Psoas muscle (tissue), 8 donors: ENCODE measurements at regions of chr2 and their contacts with region 1.

Region 1: GRCh38 chr2:43343573-43344304 is 117.3 kb upstream of the ZFP36L2 start:
- DNase-seq: peak; percentile 66 to 71
- ATAC-seq: peak in 3 of 4 donors; percentile 49 to 74 (median 61)
- H3K4me3 ChIP-seq: no peak overlapping the region
- H3K27ac ChIP-seq: peak overlapping the region; percentile 88
- H3K4me1 ChIP-seq: peaks cover 93% of the 10 kb centered on the region
- H3K27me3 ChIP-seq: no peaks in the 10 kb centered on the region
- CTCF ChIP-seq: no peak

Region 2: GRCh38 chr2:43387092-43388062 is 43.6 kb after region 1 on chr2:
- intact Hi-C with region 1: loop called in 1 of 2 experiments (anchors 5 kb)
- DNase-seq: no peak
- ATAC-seq: peak in 2 of 4 donors; percentile 50 to 60
- H3K4me3 ChIP-seq: no peak overlapping the region
- H3K27ac ChIP-seq: peak overlapping the region; percentile 57
- H3K4me1 ChIP-seq: peaks cover 34% of the 10 kb centered on the region
- H3K27me3 ChIP-seq: no peaks in the 10 kb centered on the region
- CTCF ChIP-seq: no peak

Region 3: DNA sequence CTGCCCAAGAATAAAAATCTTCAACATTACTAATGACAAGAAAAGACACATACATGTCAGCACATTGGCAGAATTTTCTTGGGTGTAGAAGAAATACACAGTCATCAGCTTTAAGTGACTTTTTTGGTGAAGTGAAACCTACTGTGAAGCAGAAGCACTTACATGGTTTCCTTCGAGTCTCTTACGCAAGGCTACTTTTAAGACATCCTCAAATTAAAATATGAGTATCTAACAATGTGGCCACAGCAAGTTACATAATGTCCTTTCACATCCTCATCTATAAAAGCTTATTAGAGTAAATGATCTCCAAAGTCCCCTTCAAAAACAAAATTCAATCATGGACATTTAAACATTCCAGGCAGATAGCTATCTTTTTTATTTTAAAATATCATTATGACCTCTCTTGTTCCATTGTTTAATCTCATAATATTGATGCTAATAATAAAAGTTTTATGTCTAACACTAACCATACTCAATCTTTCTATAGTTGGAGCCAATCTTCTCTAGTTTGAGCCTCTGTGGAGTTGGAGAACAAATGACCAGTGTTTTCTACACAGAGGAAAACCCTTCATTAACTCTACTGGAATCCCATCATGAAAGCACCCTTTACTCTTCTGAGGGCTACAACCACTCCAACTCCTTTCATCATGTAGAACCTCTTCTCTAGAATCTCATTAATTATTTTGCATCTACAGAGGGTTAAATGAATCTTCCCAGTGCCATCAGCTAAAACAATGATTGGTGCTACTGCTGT is 64.8 kb after region 1 on chr2:
- intact Hi-C with region 1: no loop called
- DNase-seq: no peak
- ATAC-seq: no peak
- H3K4me3 ChIP-seq: no peak overlapping the region
- H3K27ac ChIP-seq: no peak overlapping the region
- H3K4me1 ChIP-seq: peaks cover 45% of the 10 kb centered on the region
- H3K27me3 ChIP-seq: no peaks in the 10 kb centered on the region
- CTCF ChIP-seq: no peak

Region 4: DNA sequence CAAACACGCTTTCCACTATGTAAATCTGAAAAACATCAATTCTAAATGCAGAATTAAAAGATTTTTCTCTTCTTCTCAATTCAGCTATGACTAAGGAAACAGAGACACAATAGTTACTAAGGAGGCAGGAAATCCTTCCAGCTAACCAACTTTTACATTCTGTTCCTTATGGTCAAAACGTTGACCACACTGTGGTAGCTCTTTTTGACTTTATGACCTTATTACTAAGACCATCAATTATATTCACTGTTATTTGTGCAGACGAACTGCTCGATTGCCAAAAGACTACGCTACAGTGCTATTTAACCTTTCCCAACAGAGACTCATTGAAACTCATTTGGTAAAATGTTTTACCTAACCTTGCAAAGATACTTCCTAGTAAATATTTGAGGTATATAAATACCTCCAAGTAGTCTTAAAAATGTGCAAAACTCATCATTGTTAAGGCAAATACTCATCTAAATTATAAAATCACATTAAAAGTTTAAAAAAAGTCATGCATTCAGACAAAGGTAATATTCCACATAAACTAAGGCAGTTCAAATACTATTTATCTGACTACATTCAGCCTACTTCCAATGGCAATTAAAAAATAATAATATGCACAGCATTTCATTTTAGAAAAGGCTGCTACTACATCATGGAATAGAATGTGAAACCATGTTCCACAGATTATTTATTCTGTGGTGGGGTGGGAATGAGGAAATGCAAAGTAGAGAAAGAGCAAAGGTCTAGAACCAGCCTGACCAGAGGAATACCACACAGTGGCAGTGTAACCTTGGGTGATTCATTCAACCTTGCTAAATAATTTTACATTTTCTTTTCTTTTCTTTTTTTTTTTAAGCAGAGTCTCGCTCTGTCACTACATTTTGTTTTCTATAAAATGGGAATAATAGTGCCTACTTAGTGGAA is 112.2 kb after region 1 on chr2:
- intact Hi-C with region 1: loop called (anchors 5 to 10 kb)
- DNase-seq: no peak
- ATAC-seq: peak in 1 of 4 donors; percentile 34
- H3K4me3 ChIP-seq: no peak overlapping the region
- H3K27ac ChIP-seq: no peak overlapping the region
- H3K4me1 ChIP-seq: peaks cover 58% of the 10 kb centered on the region
- H3K27me3 ChIP-seq: no peaks in the 10 kb centered on the region
- CTCF ChIP-seq: no peak